HepG2 (cell line): ENCODE measurements at regions of chr17 and their contacts with region 1.

Region 1: GRCh38 chr17:59004338-59005111 is 102.2 kb downstream of the TRIM37 start:
- DNase-seq: peak; percentile 58
- ATAC-seq: peak; percentile 82
- H3K4me3 ChIP-seq: no peak overlapping the region
- H3K27ac ChIP-seq: no peak overlapping the region
- H3K4me1 ChIP-seq: no peaks in the 10 kb centered on the region
- H3K27me3 ChIP-seq: no peaks in the 10 kb centered on the region
- CTCF ChIP-seq: peak; percentile 91
- EP300 ChIP-seq: no peak
- POLR2A ChIP-seq: no peak
- RAD21 ChIP-seq: peak; percentile 83

Region 2: DNA sequence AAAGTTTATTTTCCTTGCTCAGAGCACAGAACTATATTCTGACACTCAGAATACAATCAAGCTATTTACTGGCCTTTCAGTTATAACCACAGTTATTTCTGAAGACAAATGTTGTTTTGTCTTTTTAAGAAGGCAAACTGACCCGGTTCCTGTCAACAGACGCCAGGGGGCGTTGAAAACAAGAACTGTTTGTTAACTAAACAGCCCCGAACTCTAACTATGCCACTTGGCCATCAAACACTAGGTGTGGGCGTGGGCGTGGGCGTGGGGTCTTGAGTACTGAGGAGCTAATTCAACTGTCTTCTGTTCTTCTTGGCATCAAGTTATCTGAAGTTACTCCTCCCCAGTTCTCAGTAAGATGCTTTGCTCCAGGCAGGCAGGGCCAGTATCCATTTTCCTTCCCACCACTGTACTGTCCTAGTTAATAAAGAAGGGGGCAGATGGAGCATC is 426.9 kb before region 1 on chr17:
- CTCF ChIA-PET with region 1: interaction called, 3 read pairs
- POLR2A ChIA-PET with region 1: no interaction called
- in situ Hi-C with region 1: no loop called
- intact Hi-C with region 1: loop called (anchors 10 kb)
- DNase-seq: peak; percentile 52
- ATAC-seq: peak; percentile 35; the same call in 2 of the 3 replicates
- H3K4me3 ChIP-seq: no peak overlapping the region
- H3K27ac ChIP-seq: no peak overlapping the region
- H3K4me1 ChIP-seq: peaks cover 39% of the 10 kb centered on the region
- H3K27me3 ChIP-seq: no peaks in the 10 kb centered on the region
- CTCF ChIP-seq: peak; percentile 60
- EP300 ChIP-seq: 0 out of 4 replicates have a peak, but pooled peaks of 1 of the 2 experiments have one; percentile 21
- POLR2A ChIP-seq: no peak
- RAD21 ChIP-seq: no peak

Region 3: DNA sequence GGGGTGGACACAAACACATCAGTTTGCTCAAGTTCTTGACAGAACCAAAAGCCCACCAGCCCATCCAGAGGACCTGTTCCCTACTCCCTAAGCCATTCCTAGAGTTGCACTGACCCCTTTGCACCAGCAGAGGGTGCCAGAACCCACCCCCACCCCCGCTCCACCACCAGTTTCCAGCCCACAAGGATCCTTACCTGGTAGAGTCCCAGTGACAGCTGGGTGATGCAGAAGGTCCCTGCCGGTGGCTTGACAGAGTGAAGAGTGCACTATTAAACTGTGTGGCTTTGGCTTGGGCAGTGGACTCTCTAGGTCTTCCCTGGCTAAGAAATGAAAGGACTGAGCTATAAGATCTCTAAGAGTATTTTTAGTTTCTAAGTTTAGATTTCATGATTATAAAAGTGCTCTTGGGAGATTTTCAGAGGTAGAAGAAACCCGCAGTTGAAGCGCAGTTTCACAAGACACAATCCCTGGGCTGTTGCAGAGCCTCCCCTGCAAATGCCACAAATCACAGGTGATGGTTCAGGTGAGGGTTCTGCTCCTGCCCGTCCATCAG is 416.7 kb before region 1 on chr17:
- CTCF ChIA-PET with region 1: interaction called, 23 read pairs
- POLR2A ChIA-PET with region 1: no interaction called
- in situ Hi-C with region 1: loop called (anchors 5 kb)
- intact Hi-C with region 1: no loop called
- DNase-seq: peak; percentile 63
- ATAC-seq: peak; percentile 95
- H3K4me3 ChIP-seq: no peak overlapping the region
- H3K27ac ChIP-seq: no peak overlapping the region
- H3K4me1 ChIP-seq: no peaks in the 10 kb centered on the region
- H3K27me3 ChIP-seq: peaks cover 0 to 4% of the 10 kb centered on the region in 2 experiments; a peak in 2 of 5 replicates
- CTCF ChIP-seq: peak; percentile 90
- EP300 ChIP-seq: no peak
- POLR2A ChIP-seq: no peak
- RAD21 ChIP-seq: peak; percentile 87

Region 4: GRCh38 chr17:58710936-58711775 is 293.4 kb before region 1 on chr17:
- CTCF ChIA-PET with region 1: interaction called, 62 read pairs
- POLR2A ChIA-PET with region 1: interaction called, 3 read pairs
- in situ Hi-C with region 1: loop called (anchors 5 kb)
- intact Hi-C with region 1: loop called (anchors 1 kb)
- DNase-seq: peak; percentile 56
- ATAC-seq: no peak
- H3K4me3 ChIP-seq: no peak overlapping the region
- H3K27ac ChIP-seq: no peak overlapping the region
- H3K4me1 ChIP-seq: no peaks in the 10 kb centered on the region
- H3K27me3 ChIP-seq: no peaks in the 10 kb centered on the region
- CTCF ChIP-seq: peak; percentile 68
- EP300 ChIP-seq: no peak
- POLR2A ChIP-seq: no peak
- RAD21 ChIP-seq: peak; percentile 66; the same call in 1 of the 2 replicates

Region 5: GRCh38 chr17:59026176-59026939 is 21.8 kb after region 1 on chr17:
- CTCF ChIA-PET with region 1: no interaction called
- POLR2A ChIA-PET with region 1: no interaction called
- in situ Hi-C with region 1: no loop called
- intact Hi-C with region 1: no loop called
- DNase-seq: no peak
- ATAC-seq: no peak
- H3K4me3 ChIP-seq: no peak overlapping the region
- H3K27ac ChIP-seq: no peak overlapping the region
- H3K4me1 ChIP-seq: no peaks in the 10 kb centered on the region
- H3K27me3 ChIP-seq: no peaks in the 10 kb centered on the region
- CTCF ChIP-seq: no peak
- EP300 ChIP-seq: no peak
- POLR2A ChIP-seq: no peak
- RAD21 ChIP-seq: no peak

Region 6: GRCh38 chr17:59062509-59062908 is 58.0 kb after region 1 on chr17:
- CTCF ChIA-PET with region 1: no interaction called
- POLR2A ChIA-PET with region 1: no interaction called
- in situ Hi-C with region 1: no loop called
- intact Hi-C with region 1: no loop called
- DNase-seq: peak; percentile 18
- ATAC-seq: no peak
- H3K4me3 ChIP-seq: no peak overlapping the region
- H3K27ac ChIP-seq: peak overlapping the region; percentile 36
- H3K4me1 ChIP-seq: peaks cover 23% of the 10 kb centered on the region
- H3K27me3 ChIP-seq: no peaks in the 10 kb centered on the region
- CTCF ChIP-seq: no peak
- EP300 ChIP-seq: peak in 1 of 2 experiments; percentile 48; a peak in 1 of 4 replicates
- POLR2A ChIP-seq: no peak
- RAD21 ChIP-seq: no peak